K562 (cell line): ENCODE measurements at regions of chr1 and their contacts with region 1.

Region 1: GRCh38 chr1:182198049-182198501 is 136.6 kb upstream of the ZNF648 start:
- DNase-seq: peak in 3 of 4 experiments; percentile 32 to 49 (median 48)
- ATAC-seq: peak; percentile 78
- H3K4me3 ChIP-seq: no peak overlapping the region
- H3K27ac ChIP-seq: no peak overlapping the region
- H3K4me1 ChIP-seq: peaks cover 0 to 11% of the 10 kb centered on the region in 2 experiments; a peak in 3 of 5 replicates
- H3K27me3 ChIP-seq: no peaks in the 10 kb centered on the region
- CTCF ChIP-seq: peak; percentile 57 to 80 (median 67)
- EP300 ChIP-seq: no peak
- POLR2A ChIP-seq: no peak
- RAD21 ChIP-seq: peak; percentile 60 to 84

Region 2: DNA sequence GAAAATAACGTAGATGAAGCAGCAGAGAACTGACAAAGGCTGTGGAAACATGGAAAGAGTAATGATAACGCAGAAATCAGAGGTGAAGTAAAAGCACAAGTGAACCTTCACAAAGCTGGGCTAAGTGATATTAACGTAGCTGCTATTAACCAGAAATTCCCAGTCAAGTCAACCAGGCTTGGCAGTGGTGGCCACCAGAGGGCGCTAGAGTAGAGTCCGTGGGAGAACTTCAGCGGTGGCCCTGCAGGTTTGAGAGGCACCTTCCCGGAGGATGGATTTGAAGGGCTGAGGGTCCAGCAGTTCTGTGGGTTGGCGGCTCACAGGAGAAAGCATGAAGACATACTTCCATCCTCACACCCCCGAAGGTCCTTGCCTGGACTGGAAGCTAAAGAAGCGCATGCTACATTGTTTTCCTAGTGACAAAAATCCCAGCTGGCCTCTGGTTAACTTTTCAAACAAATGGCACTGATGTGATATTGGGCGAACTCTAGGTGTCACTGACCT is 54.9 kb before region 1 on chr1:
- CTCF ChIA-PET with region 1: interaction called, 17 read pairs
- POLR2A ChIA-PET with region 1: interaction called, 4 read pairs
- in situ Hi-C with region 1: no loop called
- intact Hi-C with region 1: loop called (anchors 1 kb)
- DNase-seq: peak; percentile 83 to 93 (median 88)
- ATAC-seq: peak; percentile 92
- H3K4me3 ChIP-seq: no peak overlapping the region
- H3K27ac ChIP-seq: no peak overlapping the region
- H3K4me1 ChIP-seq: peaks cover 12% of the 10 kb centered on the region in 2 experiments
- H3K27me3 ChIP-seq: peaks cover 0 to 4% of the 10 kb centered on the region in 2 experiments; a peak in 2 of 5 replicates
- CTCF ChIP-seq: peak; percentile 97 to 99 (median 98)
- EP300 ChIP-seq: peak; percentile 25; the same call in 1 of the 2 replicates
- POLR2A ChIP-seq: no peak
- RAD21 ChIP-seq: peak; percentile 96 to 100

Region 3: DNA sequence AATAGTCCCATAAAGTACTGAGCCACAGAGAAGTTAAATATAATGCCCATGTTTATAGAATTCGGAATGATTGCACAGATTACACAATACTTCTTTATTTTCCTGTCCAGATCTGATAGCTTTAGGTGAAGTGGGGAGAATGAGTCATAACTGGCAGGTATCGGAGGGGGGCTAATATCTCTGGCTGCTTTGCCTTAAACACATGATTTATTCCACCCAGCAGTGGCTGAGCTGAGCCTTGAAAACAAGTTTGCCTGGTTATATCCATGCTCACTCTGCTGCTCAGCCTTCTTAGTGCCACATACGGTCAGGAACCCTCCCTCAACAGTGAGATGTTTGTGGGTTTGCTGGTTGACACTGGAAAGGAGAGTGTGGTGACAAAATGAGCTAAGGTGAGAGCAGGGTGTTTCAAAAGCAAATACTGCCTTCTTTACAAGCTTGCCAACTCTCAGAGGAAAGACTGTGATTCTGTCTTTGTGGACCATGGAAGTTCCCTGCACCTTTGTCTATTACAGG is 16.9 kb before region 1 on chr1:
- CTCF ChIA-PET with region 1: no interaction called
- POLR2A ChIA-PET with region 1: interaction called, 18 read pairs
- in situ Hi-C with region 1: no loop called
- intact Hi-C with region 1: no loop called
- DNase-seq: no peak
- ATAC-seq: no peak
- H3K4me3 ChIP-seq: no peak overlapping the region
- H3K27ac ChIP-seq: no peak overlapping the region
- H3K4me1 ChIP-seq: no peaks in the 10 kb centered on the region
- H3K27me3 ChIP-seq: peaks cover 4 to 30% of the 10 kb centered on the region in 2 experiments; a peak in 4 of 5 replicates
- CTCF ChIP-seq: no peak
- EP300 ChIP-seq: no peak
- POLR2A ChIP-seq: no peak
- RAD21 ChIP-seq: no peak

Region 4: DNA sequence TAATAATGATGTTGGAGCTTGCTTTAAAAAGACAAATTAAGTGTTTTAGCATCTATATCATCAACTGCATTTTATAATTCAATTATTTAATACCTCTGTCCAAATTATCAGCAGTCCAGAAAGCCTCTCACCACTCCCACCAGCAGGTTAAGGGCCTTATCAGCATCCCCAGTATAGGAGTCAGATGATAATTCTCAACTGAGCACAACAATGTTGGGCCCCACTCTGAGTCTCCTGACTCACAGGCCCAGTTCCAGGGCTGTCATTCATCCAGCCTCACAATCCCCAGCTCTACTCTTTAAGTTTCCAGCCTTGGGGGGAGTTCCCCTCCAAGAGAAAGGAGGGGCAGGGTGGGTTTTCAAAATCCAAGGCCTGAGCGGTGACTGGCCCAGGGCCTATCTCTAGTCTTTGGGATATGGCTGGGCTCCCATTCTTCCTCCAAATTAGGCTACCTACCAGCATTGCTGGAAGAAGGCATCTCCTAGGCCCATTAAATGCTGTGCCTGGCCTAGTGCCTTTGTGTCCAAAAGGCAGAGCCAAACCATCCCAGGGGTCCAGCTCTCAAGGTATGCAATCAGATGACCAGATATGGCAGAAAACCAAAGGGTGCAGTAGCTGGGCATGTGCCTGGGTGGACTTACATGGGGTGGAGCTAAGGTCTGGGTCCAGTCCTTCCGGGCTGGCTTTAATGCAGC is 59.4 kb after region 1 on chr1:
- CTCF ChIA-PET with region 1: no interaction called
- POLR2A ChIA-PET with region 1: no interaction called
- in situ Hi-C with region 1: no loop called
- intact Hi-C with region 1: loop called (anchors 2 kb)
- DNase-seq: peak; percentile 79 to 95 (median 86)
- ATAC-seq: peak; percentile 93
- H3K4me3 ChIP-seq: no peak overlapping the region
- H3K27ac ChIP-seq: peak overlapping the region; percentile 83
- H3K4me1 ChIP-seq: peaks cover 37 to 47% of the 10 kb centered on the region in 2 experiments
- H3K27me3 ChIP-seq: no peaks in the 10 kb centered on the region
- CTCF ChIP-seq: peak in 1 of 3 experiments; percentile 22; a peak in 2 of 6 replicates
- EP300 ChIP-seq: peak; percentile 94
- POLR2A ChIP-seq: no peak
- RAD21 ChIP-seq: peak; percentile 30 to 33; a peak in 3 of 4 replicates

Region 5: DNA sequence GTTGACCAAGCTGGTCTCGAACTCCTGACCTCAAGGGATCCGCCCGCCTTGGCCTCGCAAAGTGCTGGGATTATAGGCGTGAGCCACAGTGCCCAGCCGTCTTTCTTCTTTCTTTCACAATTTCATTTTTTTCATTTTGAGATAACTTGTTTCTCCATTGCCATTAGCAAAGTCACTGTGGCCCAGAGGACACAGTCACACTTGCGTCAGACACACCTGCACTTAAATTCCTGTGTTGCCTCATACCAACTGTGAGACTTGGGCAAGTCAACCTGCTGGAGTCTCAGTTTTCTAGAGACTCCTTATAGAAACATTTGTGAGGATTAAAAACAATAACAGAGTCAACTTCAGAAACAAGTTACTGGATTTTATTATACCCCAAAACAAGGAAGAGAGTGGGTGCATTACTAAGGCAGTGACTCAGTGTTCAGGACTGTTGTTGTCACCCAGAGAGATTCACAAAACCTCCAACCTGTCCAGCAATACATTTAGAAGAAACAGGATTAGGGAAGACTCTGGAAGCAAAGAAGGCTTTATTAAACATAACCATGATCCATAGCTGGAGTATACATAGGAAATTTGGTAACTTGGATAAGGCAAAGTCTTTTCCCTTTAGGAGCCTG is 199.8 kb after region 1 on chr1:
- CTCF ChIA-PET with region 1: interaction called, 3 read pairs
- POLR2A ChIA-PET with region 1: interaction called, 3 read pairs
- in situ Hi-C with region 1: no loop called
- intact Hi-C with region 1: loop called (anchors 1 kb)
- DNase-seq: no peak
- ATAC-seq: no peak
- H3K4me3 ChIP-seq: no peak overlapping the region
- H3K27ac ChIP-seq: no peak overlapping the region
- H3K4me1 ChIP-seq: peaks cover 0 to 22% of the 10 kb centered on the region in 2 experiments; a peak in 3 of 5 replicates
- H3K27me3 ChIP-seq: no peaks in the 10 kb centered on the region
- CTCF ChIP-seq: no peak
- EP300 ChIP-seq: no peak
- POLR2A ChIP-seq: no peak
- RAD21 ChIP-seq: no peak